Esophagus muscularis mucosa (tissue), 4 donors: ENCODE measurements at regions of chr9 and their contacts with region 1.

Region 1: GRCh38 chr9:4228606-4229005 is 71.3 kb downstream of the GLIS3 start:
- DNase-seq: no peak
- H3K4me3 ChIP-seq: no peak overlapping the region
- H3K27ac ChIP-seq: no peak overlapping the region
- H3K4me1 ChIP-seq: peaks cover 0 to 3% (median 0%) of the 10 kb centered on the region in 4 donors
- H3K27me3 ChIP-seq: no peaks in the 10 kb centered on the region
- CTCF ChIP-seq: peak; percentile 53 to 77 (median 63)
- EP300 ChIP-seq: no peak
- POLR2A ChIP-seq: no peak

Region 2: GRCh38 chr9:3732077-3733038 is 496.2 kb before region 1 on chr9:
- intact Hi-C with region 1: loop called (anchors 10 kb)
- DNase-seq: no peak
- H3K4me3 ChIP-seq: peak overlapping the region in 2 of 4 donors; percentile 5 to 23
- H3K27ac ChIP-seq: peak overlapping the region in 3 of 4 donors; percentile 1 to 22 (median 14)
- H3K4me1 ChIP-seq: peaks cover 0 to 16% (median 9%) of the 10 kb centered on the region in 4 donors
- H3K27me3 ChIP-seq: no peaks in the 10 kb centered on the region
- CTCF ChIP-seq: peak; percentile 64 to 77 (median 70)
- EP300 ChIP-seq: no peak
- POLR2A ChIP-seq: no peak